Spleen (tissue), 13 donors: ENCODE measurements at regions of chr19 and their contacts with region 1.

Region 1: GRCh38 chr19:12983542-12984142 is 11.6 kb upstream of the NFIX start:
- DNase-seq: peak; percentile 94
- H3K4me3 ChIP-seq: peak overlapping the region in 4 of 8 donors; percentile 21 to 56 (median 24)
- H3K27ac ChIP-seq: no peak overlapping the region
- H3K4me1 ChIP-seq: peaks cover 0 to 34% (median 14%) of the 10 kb centered on the region in 6 donors
- H3K27me3 ChIP-seq: peaks cover 0 to 47% (median 0%) of the 10 kb centered on the region in 7 donors
- CTCF ChIP-seq: peak; percentile 82 to 99 (median 96)
- POLR2A ChIP-seq: no peak

Region 2: GRCh38 chr19:13033819-13034611 is 50.4 kb after region 1 on chr19:
- intact Hi-C with region 1: loop called (anchors 10 kb)
- DNase-seq: no peak
- H3K4me3 ChIP-seq: no peak overlapping the region
- H3K27ac ChIP-seq: no peak overlapping the region
- H3K4me1 ChIP-seq: peaks cover 0 to 27% (median 12%) of the 10 kb centered on the region in 6 donors
- H3K27me3 ChIP-seq: no peaks in the 10 kb centered on the region
- CTCF ChIP-seq: peak; percentile 19 to 74 (median 62)
- POLR2A ChIP-seq: no peak

Region 3: GRCh38 chr19:13093407-13094105 is 109.9 kb after region 1 on chr19:
- intact Hi-C with region 1: loop called (anchors 2 kb)
- DNase-seq: peak; percentile 96
- H3K4me3 ChIP-seq: no peak overlapping the region
- H3K27ac ChIP-seq: peak overlapping the region in 5 of 8 donors; percentile 96 to 99 (median 97)
- H3K4me1 ChIP-seq: peaks cover 6 to 55% (median 49%) of the 10 kb centered on the region in 6 donors
- H3K27me3 ChIP-seq: peaks cover 0 to 35% (median 0%) of the 10 kb centered on the region in 7 donors
- CTCF ChIP-seq: peak; percentile 95 to 99 (median 97)
- POLR2A ChIP-seq: no peak